ENCODE measurements at regions of chr12 and their contacts with region 1.

Region 1: GRCh38 chr12:2583091-2583497 is 211.7 kb upstream of the FKBP4 start:
- DNase-seq: peak; percentile 26 to 78 (median 69)
- H3K4me3 ChIP-seq: no peak overlapping the region
- H3K27ac ChIP-seq: no peak overlapping the region
- H3K4me1 ChIP-seq: peaks cover 2% of the 10 kb centered on the region
- H3K27me3 ChIP-seq: no peaks in the 10 kb centered on the region
- CTCF ChIP-seq: peak; percentile 24 to 72 (median 72)
- EP300 ChIP-seq: no peak
- POLR2A ChIP-seq: no peak

Region 2: GRCh38 chr12:1644534-1645438 is 938.3 kb before region 1 on chr12:
- intact Hi-C with region 1: loop called in 1 of 4 experiments (anchors 10 kb)
- DNase-seq: peak; percentile 82 to 92 (median 85)
- H3K4me3 ChIP-seq: no peak overlapping the region
- H3K27ac ChIP-seq: peak overlapping the region in 1 of 2 donors; percentile 59
- H3K4me1 ChIP-seq: peaks cover 4% of the 10 kb centered on the region
- H3K27me3 ChIP-seq: no peaks in the 10 kb centered on the region
- CTCF ChIP-seq: no peak
- EP300 ChIP-seq: no peak
- POLR2A ChIP-seq: no peak

Region 3: GRCh38 chr12:2291182-2291832 is 291.8 kb before region 1 on chr12:
- intact Hi-C with region 1: loop called in 1 of 4 experiments (anchors 10 kb)
- DNase-seq: no peak
- H3K4me3 ChIP-seq: no peak overlapping the region
- H3K27ac ChIP-seq: no peak overlapping the region
- H3K4me1 ChIP-seq: no peaks in the 10 kb centered on the region
- H3K27me3 ChIP-seq: no peaks in the 10 kb centered on the region
- CTCF ChIP-seq: peak in 1 of 3 donors; percentile 13
- EP300 ChIP-seq: no peak
- POLR2A ChIP-seq: no peak

Region 4: DNA sequence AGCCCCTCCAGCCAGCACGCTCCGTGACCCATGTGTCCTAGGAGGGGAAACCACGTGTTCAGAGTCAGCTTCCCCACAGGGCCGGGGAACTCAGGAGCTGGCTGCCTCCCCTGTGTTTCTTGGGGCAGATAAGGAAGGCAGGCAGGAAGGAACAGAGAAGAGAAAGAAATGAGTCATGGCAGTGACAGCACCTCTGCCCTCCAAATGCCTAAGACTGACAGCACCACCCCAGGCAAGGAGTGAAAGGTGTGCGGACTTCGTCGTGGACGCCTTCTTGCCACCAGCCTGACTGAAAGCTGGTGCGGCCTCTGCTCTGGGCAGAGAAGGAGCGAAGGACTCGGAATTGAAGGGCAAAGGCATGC is 44.7 kb after region 1 on chr12:
- intact Hi-C with region 1: no loop called
- DNase-seq: no peak
- H3K4me3 ChIP-seq: no peak overlapping the region
- H3K27ac ChIP-seq: no peak overlapping the region
- H3K4me1 ChIP-seq: peaks cover 2% of the 10 kb centered on the region
- H3K27me3 ChIP-seq: no peaks in the 10 kb centered on the region
- CTCF ChIP-seq: no peak
- EP300 ChIP-seq: no peak
- POLR2A ChIP-seq: no peak

Region 5: GRCh38 chr12:2949411-2949810 is 366.3 kb after region 1 on chr12:
- intact Hi-C with region 1: no loop called
- DNase-seq: no peak
- H3K4me3 ChIP-seq: no peak overlapping the region
- H3K27ac ChIP-seq: no peak overlapping the region
- H3K4me1 ChIP-seq: no peaks in the 10 kb centered on the region
- H3K27me3 ChIP-seq: no peaks in the 10 kb centered on the region
- CTCF ChIP-seq: no peak
- EP300 ChIP-seq: no peak
- POLR2A ChIP-seq: no peak